ENCODE measurements at regions of chr1 and their contacts with region 1.

Region 1: GRCh38 chr1:25338188-25338981 is at the start of gene TMEM50A:
- DNase-seq: peak; percentile 87 to 99 (median 92)
- ATAC-seq: peak; percentile 90
- H3K4me3 ChIP-seq: peak within 1 kb of the TSS; percentile 94
- H3K4me3 Mint-ChIP-seq: peak within 1 kb of the TSS; percentile 93 to 97 (median 94)
- H3K27ac ChIP-seq: peak within 1 kb of the TSS; percentile 97
- H3K27ac Mint-ChIP-seq: peak within 1 kb of the TSS; percentile 80 to 96 (median 94)
- H3K4me1 ChIP-seq: peaks cover 20 to 22% of the 10 kb centered on the region in 2 donors
- H3K4me1 Mint-ChIP-seq: peaks cover 26 to 58% (median 45%) of the 10 kb centered on the region in 7 donors
- H3K27me3 ChIP-seq: no peaks in the 10 kb centered on the region
- H3K27me3 Mint-ChIP-seq: no peaks in the 10 kb centered on the region
- total RNA-seq, gene TMEM50A: 61.6 to 149 (median 79.0) TPM

Region 2: DNA sequence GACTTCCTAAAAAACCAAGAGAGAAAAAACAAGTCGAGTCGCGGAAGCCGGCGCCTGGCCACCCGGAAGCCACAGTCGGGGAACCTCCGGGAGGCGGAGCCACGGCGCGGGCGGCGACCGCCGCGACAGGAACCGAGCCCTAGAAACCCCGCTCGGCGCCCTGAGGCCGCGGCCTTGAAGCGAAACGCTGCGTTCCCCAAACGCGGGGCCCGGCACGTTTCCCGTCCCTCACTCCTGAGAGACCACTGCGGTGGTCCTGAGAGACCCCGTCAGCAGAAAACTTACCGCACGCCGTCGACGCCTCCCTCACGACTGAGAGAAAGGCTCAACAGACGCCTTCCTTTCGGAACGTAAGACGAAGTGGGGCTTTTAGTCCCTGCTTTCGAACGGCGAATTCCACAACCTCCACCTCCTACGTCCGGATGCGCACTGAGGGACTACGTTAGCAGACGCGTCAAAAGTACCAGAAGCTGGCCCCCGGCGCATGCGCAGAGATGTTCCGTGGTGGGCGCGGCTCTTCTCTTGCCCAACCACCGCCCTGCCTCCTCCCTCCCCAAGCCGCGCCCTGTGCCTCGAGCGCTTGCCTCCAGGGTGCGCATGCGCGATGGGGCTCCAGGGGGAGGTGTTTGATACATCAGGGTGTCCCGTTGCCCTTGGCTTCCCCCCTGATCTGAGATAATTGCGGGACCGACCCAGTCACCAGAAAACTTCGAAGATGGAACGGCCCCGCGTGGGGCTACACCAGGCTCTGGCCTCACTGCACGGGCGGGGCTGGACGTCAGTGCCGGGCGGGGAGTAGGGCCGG is 91.2 kb before region 1 on chr1 and contains the start of gene RSRP1:
- CTCF ChIA-PET with region 1: no interaction called
- POLR2A ChIA-PET with region 1: interaction called, 7 read pairs
- intact Hi-C with region 1: loop called (anchors 2 kb)
- DNase-seq: peak; percentile 99 to 100 (median 99)
- ATAC-seq: peak; percentile 91
- H3K4me3 ChIP-seq: peak within 1 kb of the TSS; percentile 94
- H3K4me3 Mint-ChIP-seq: peak within 1 kb of the TSS; percentile 96 to 99 (median 97)
- H3K27ac ChIP-seq: peak within 1 kb of the TSS; percentile 98
- H3K27ac Mint-ChIP-seq: peak within 1 kb of the TSS; percentile 98 to 100 (median 100)
- H3K4me1 ChIP-seq: peaks cover 30 to 35% of the 10 kb centered on the region in 2 donors
- H3K4me1 Mint-ChIP-seq: peaks cover 28 to 65% (median 51%) of the 10 kb centered on the region in 7 donors
- H3K27me3 ChIP-seq: no peaks in the 10 kb centered on the region
- H3K27me3 Mint-ChIP-seq: peaks cover 0 to 8% (median 0%) of the 10 kb centered on the region in 5 donors
- total RNA-seq, gene RSRP1: 230 to 449 (median 425) TPM

Region 3: DNA sequence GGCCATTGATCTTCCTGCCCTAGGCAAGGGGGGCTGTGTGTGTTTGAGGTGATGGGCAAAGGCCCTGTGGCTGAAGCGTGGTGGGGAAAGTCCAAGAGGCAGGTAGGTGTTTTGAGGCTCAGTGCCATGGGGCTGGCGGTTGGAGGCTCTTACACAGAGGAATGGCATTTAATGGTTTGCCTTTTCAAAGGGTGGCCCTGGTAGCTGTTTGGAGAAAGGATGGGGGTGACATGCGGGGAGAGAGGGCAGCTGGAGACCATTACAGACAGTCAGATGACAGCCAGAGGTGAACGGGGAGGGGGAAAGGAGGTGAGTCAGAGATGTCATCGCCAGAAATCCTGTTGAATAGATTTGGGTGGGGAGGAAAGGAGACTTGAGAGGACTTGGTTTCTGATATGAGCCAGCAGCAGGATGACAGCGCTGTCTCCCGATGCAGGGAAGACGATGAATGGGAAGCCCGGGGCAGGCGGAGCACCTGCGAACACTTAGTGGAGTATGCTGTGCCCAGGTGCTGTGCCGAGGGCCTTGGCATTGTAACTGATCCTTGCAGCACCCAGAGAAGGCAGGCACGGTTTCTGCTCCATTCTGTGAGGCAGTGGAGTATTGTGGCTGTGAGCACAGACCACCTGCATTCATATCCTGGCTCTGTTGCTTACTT is 334.5 kb after region 1 on chr1:
- CTCF ChIA-PET with region 1: no interaction called
- POLR2A ChIA-PET with region 1: no interaction called
- intact Hi-C with region 1: no loop called
- DNase-seq: no peak
- ATAC-seq: no peak
- H3K4me3 ChIP-seq: no peak overlapping the region
- H3K4me3 Mint-ChIP-seq: peak overlapping the region in 8 of 10 donors; percentile 10 to 89 (median 60)
- H3K27ac ChIP-seq: peak overlapping the region; percentile 50
- H3K27ac Mint-ChIP-seq: peak overlapping the region in 8 of 9 donors; percentile 90 to 98 (median 96)
- H3K4me1 ChIP-seq: peaks cover 34 to 96% of the 10 kb centered on the region in 2 donors
- H3K4me1 Mint-ChIP-seq: peaks cover 67 to 98% (median 96%) of the 10 kb centered on the region in 7 donors
- H3K27me3 ChIP-seq: no peaks in the 10 kb centered on the region
- H3K27me3 Mint-ChIP-seq: peaks cover 0 to 73% (median 0%) of the 10 kb centered on the region in 5 donors

Measured in naive thymus-derived CD4-positive, alpha-beta T cell (primary cell).